ENCODE measurements at regions of chr4 and their contacts with region 1.

Region 1: GRCh38 chr4:8198906-8199593 is at the start of gene SH3TC1:
- DNase-seq: peak; percentile 68
- ATAC-seq: peak; percentile 80
- H3K4me3 ChIP-seq: peak within 1 kb of the TSS; percentile 74
- H3K27ac ChIP-seq: peak within 1 kb of the TSS; percentile 94
- H3K4me1 ChIP-seq: peaks cover 44% of the 10 kb centered on the region
- H3K27me3 ChIP-seq: no peaks in the 10 kb centered on the region
- CTCF ChIP-seq: 0 out of 6 replicates have a peak, but pooled peaks of 1 of the 3 experiments have one; percentile 4
- EP300 ChIP-seq: peak; percentile 60 to 68; a peak in 3 of 4 replicates
- POLR2A ChIP-seq: no peak
- RAD21 ChIP-seq: no peak
- polyA plus RNA-seq, gene SH3TC1: 0.19 to 0.62 TPM

Region 2: GRCh38 chr4:8221476-8221875 is 22.4 kb after region 1 on chr4:
- CTCF ChIA-PET with region 1: interaction called, 8 read pairs
- POLR2A ChIA-PET with region 1: interaction called, 10 read pairs
- RAD21 ChIA-PET with region 1: interaction called, 9 read pairs
- SMC1A ChIA-PET with region 1: interaction called, 19 read pairs
- in situ Hi-C with region 1: no loop called
- intact Hi-C with region 1: no loop called
- DNase-seq: peak; percentile 46
- ATAC-seq: peak; percentile 91
- H3K4me3 ChIP-seq: no peak overlapping the region
- H3K27ac ChIP-seq: peak overlapping the region; percentile 67; the same call in 1 of the 2 replicates
- H3K4me1 ChIP-seq: peaks cover 11% of the 10 kb centered on the region
- H3K27me3 ChIP-seq: no peaks in the 10 kb centered on the region
- CTCF ChIP-seq: no peak
- EP300 ChIP-seq: peak; percentile 79 to 87; a peak in 3 of 4 replicates
- POLR2A ChIP-seq: no peak
- RAD21 ChIP-seq: no peak

Region 3: DNA sequence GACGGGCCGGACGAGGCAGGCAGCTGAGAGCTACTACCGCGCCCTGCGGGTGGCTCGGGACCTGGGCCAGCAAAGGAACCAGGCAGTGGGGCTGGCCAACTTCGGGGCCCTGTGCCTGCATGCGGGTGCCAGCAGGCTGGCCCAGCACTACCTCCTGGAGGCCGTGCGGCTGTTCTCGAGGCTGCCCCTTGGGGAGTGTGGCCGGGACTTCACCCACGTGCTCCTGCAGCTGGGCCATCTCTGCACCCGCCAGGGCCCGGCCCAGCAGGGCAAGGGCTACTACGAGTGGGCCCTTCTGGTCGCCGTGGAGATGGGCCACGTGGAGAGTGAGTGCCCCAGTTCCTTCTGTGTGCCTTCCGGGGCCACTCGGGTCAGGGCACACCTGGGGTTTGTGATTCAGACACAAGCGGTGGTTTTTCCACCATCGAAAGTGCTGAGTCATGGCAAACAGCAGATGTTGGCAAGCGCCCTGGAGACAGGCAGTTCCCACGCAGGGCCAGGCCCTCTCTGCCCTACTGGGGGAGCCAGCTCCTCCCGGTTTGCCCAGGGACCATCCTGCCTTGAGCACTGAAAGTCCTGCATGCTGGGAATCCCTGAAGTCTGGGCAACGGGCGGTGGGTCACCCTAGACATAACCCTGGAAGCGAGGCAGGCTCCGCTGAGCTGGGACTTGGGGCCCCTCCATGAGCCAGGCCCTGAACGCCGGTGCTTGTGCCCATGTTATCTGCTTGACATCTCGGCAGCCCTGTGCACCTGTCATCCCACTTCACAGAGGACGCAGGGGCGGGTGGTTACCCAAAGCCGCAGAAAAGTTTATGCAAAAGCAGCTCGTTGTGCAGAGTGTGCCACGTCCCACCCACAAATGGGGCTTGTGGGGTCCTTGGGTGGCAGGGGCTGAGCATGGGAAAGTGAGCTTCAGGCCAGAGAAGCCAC is 29.5 kb after region 1 on chr4:
- CTCF ChIA-PET with region 1: interaction called, 12 read pairs
- POLR2A ChIA-PET with region 1: interaction called, 14 read pairs
- RAD21 ChIA-PET with region 1: interaction called, 28 read pairs
- SMC1A ChIA-PET with region 1: interaction called, 16 read pairs
- in situ Hi-C with region 1: no loop called
- intact Hi-C with region 1: loop called (anchors 2 kb)
- DNase-seq: peak; percentile 76
- ATAC-seq: peak; percentile 88
- H3K4me3 ChIP-seq: no peak overlapping the region
- H3K27ac ChIP-seq: peak overlapping the region; percentile 83
- H3K4me1 ChIP-seq: peaks cover 29% of the 10 kb centered on the region
- H3K27me3 ChIP-seq: no peaks in the 10 kb centered on the region
- CTCF ChIP-seq: peak in 1 of 3 experiments; percentile 21; a peak in 1 of 6 replicates
- EP300 ChIP-seq: peak; percentile 62 to 78; a peak in 3 of 4 replicates
- POLR2A ChIP-seq: peak; percentile 45
- RAD21 ChIP-seq: no peak

Region 4: DNA sequence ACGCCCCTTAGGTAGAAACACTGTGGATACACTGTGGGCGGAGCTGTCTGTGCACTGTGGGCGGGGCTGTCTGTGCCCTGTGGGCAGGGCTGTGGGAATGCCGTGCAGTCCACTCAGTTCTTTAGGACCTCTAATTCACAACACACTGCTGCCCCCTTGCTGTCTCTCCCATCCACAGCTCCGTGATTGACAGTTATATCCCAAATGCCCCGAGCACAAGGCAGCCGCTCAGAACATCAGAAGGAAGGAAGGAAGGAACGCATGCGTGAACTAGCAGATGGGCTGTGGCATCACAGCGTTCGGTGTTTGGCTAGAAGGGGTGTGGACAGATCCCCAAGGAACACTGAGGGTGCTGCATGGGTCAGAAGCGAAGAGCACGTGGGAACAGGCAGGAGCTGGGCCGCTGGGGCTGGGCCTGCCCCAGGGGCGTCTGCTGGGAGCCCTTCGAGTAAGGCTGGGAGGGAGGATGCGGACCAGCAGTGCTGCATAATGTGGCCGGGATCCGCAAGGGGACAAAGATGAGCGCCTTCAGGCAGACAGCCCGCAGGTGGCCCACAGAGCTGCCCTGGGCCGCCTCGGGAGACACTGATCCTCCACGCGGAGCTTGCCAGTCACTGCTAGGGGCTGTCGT is 211.7 kb after region 1 on chr4:
- CTCF ChIA-PET with region 1: no interaction called
- POLR2A ChIA-PET with region 1: no interaction called
- RAD21 ChIA-PET with region 1: no interaction called
- SMC1A ChIA-PET with region 1: no interaction called
- in situ Hi-C with region 1: no loop called
- intact Hi-C with region 1: no loop called
- DNase-seq: no peak
- ATAC-seq: peak; percentile 64
- H3K4me3 ChIP-seq: no peak overlapping the region
- H3K27ac ChIP-seq: no peak overlapping the region
- H3K4me1 ChIP-seq: no peaks in the 10 kb centered on the region
- H3K27me3 ChIP-seq: no peaks in the 10 kb centered on the region
- CTCF ChIP-seq: peak in 2 of 3 experiments; percentile 20 to 26; a peak in 2 of 6 replicates
- EP300 ChIP-seq: no peak
- POLR2A ChIP-seq: no peak
- RAD21 ChIP-seq: 0 out of 2 replicates have a peak, but pooled peaks have one; percentile 2